ENCODE measurements at regions of chr5 and their contacts with region 1.

Region 1: DNA sequence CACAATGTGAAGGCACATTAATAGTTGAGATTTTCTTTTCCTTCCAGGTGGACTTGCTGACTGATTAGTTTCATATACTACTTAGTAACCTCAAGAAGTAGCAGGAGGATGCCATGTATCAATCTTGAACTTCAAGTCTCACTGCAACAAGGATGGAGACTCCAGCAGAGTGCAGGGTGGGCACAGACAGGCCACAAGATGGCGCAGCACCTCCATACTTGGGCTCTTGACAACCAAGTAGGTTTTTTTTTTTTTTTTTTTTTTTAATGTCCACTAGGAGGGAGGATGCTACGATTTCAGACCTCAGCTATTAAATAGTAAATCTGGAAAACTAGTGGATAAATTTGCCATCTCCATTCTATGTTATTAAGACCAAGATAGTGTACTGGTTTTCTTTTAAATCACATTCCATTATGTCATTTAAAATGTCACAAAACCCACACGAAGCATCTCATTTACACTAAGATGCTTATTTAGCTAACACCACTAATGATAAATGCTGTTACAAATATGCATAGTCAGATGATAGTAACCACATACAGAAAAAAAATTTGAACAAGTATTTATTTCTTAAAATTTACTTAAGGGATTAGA is 58.6 kb downstream of the IL6ST start:
- DNase-seq: peak; percentile 61 to 76 (median 65)
- H3K4me3 ChIP-seq: no peak overlapping the region
- H3K4me3 Mint-ChIP-seq: no peak overlapping the region
- H3K27ac ChIP-seq: no peak overlapping the region
- H3K27ac Mint-ChIP-seq: peak overlapping the region in 4 of 7 donors; percentile 25 to 73 (median 42)
- H3K4me1 ChIP-seq: peaks cover 5% of the 10 kb centered on the region
- H3K4me1 Mint-ChIP-seq: peaks cover 0 to 8% (median 4%) of the 10 kb centered on the region in 4 donors
- H3K27me3 ChIP-seq: no peaks in the 10 kb centered on the region
- H3K27me3 Mint-ChIP-seq: no peaks in the 10 kb centered on the region

Region 2: DNA sequence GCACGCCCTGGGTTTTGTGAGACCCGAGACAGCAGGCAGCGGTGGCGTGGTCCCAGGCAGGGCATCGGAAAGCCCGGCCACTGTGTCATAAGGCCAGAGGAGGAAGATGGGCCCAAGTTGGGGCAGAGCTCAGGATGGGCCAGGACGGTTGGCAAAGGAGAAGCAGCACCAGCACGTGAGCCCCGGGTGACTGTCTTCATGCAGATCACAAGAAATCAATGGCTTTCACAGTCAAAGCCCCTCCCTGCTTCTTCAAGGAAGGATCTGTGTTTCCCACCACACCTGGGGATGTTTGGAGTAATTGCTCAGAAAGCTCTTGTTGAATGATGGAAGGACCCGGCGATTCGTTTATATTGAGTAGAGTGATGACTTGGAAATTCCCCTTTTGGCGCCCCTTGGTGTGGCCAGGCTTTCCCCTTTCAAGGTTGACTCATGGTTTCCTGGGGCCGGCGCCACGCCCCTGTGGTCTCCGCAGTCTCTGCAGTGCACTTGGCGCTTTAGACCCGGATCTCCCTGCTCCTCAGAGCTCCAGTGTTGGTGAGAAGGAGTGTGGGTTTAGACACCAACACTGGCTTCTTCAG is 33.0 kb before region 1 on chr5:
- CTCF ChIA-PET with region 1: no interaction called
- POLR2A ChIA-PET with region 1: no interaction called
- intact Hi-C with region 1: no loop called
- DNase-seq: peak; percentile 43 to 85 (median 51)
- H3K4me3 ChIP-seq: peak overlapping the region in 1 of 2 donors; percentile 1
- H3K4me3 Mint-ChIP-seq: peak overlapping the region in 7 of 8 donors; percentile 49 to 77 (median 66)
- H3K27ac ChIP-seq: no peak overlapping the region
- H3K27ac Mint-ChIP-seq: peak overlapping the region in 6 of 7 donors; percentile 36 to 84 (median 76)
- H3K4me1 ChIP-seq: peaks cover 25% of the 10 kb centered on the region
- H3K4me1 Mint-ChIP-seq: peaks cover 17 to 33% (median 25%) of the 10 kb centered on the region in 4 donors
- H3K27me3 ChIP-seq: no peaks in the 10 kb centered on the region
- H3K27me3 Mint-ChIP-seq: no peaks in the 10 kb centered on the region

Region 3: GRCh38 chr5:55923177-55923771 is 12.9 kb before region 1 on chr5:
- CTCF ChIA-PET with region 1: interaction called, 21 read pairs
- POLR2A ChIA-PET with region 1: interaction called, 3 read pairs
- intact Hi-C with region 1: no loop called
- DNase-seq: peak in 3 of 5 donors; percentile 8 to 19 (median 18)
- H3K4me3 ChIP-seq: peak overlapping the region; percentile 36 to 65
- H3K4me3 Mint-ChIP-seq: peak overlapping the region; percentile 92 to 98 (median 96)
- H3K27ac ChIP-seq: peak overlapping the region; percentile 18
- H3K27ac Mint-ChIP-seq: peak overlapping the region in 6 of 7 donors; percentile 46 to 91 (median 86)
- H3K4me1 ChIP-seq: peaks cover 24% of the 10 kb centered on the region
- H3K4me1 Mint-ChIP-seq: peaks cover 11 to 28% (median 17%) of the 10 kb centered on the region in 4 donors
- H3K27me3 ChIP-seq: no peaks in the 10 kb centered on the region
- H3K27me3 Mint-ChIP-seq: no peaks in the 10 kb centered on the region

Region 4: DNA sequence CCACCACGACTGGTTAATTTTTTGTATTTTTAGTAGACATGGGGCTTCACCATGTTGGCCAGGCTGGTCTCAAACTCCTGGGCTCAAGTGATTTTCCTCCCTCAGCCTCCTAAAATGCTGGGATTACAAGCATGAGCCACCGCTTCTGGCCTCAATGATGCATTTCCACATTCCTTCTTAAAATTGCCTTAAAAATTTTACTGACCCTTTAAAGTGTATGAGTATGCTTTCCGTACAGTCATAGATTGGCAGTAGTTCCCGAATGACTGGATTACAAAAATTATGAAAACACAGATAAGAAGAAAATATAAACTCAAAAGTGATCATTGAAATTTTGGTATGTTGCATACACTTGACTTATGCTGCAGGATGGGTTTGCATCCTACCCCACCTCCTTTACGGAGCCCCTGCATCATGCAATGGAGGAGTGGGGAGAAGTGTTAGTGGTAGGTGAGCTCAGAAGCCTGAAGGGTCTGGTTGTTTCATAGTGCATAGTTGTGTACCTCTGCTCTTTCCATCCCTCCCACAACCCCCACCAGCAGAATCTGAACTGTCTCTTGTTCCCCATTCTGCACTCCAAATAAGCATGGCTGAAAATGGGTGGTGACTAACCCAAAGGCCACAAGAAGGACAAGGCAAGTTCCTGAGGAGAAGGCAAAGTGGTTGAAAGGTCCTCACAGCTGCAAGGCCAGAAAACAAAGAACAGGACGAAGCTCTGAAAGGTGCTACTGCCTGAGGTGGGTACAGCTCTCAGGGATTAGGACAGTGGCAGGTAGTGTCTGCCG is 270.1 kb after region 1 on chr5:
- CTCF ChIA-PET with region 1: interaction called, 146 read pairs
- POLR2A ChIA-PET with region 1: interaction called, 8 read pairs
- intact Hi-C with region 1: loop called (anchors 1 kb)
- DNase-seq: no peak
- H3K4me3 ChIP-seq: no peak overlapping the region
- H3K4me3 Mint-ChIP-seq: no peak overlapping the region
- H3K27ac ChIP-seq: no peak overlapping the region
- H3K27ac Mint-ChIP-seq: no peak overlapping the region
- H3K4me1 ChIP-seq: peaks cover 6% of the 10 kb centered on the region
- H3K4me1 Mint-ChIP-seq: peaks cover 14 to 23% (median 17%) of the 10 kb centered on the region in 4 donors
- H3K27me3 ChIP-seq: no peaks in the 10 kb centered on the region
- H3K27me3 Mint-ChIP-seq: no peaks in the 10 kb centered on the region